ENCODE measurements at regions of chr5 and their contacts with region 1.

Region 1: DNA sequence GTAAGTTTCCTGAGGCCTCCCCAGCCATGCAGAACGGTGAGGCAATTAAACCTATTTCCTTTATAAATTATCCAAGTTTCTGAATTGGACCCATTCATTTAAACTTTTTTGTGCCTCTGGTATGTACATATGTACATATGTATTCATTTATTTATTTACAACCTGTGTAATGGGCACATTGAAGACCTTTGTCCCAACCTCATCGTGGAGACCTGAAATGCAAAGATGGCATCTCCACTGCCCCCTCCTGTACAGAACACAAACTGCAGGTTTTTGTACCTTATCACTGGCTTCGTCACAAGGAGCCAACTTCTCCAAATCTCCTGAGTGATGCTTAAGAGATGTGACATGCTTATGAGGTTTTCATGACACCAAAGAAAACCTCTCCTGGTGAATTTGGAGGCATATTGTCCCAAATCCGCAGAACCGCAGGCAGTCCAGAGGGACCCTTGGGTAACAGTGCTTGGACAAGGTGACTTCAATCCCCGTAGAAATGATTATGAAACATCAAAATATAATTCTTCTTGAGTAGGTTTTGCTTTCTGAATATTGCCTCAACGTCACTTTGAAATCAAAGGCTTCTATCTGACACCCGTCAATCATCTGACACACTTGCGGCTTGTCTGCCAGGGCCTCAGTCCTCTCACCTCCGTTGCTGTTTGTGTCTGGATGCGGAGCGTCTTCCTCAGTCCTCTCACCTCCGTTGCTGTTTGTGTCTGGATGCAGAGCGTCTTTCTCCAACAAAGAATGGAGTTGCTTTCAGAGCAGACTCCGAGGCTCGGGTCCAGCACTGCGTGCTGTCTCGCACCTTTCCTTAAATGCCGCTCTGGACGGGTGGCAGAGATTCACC is 135.0 kb upstream of the IRX4 start:
- DNase-seq: peak; percentile 62
- H3K4me3 Mint-ChIP-seq: no peak overlapping the region
- H3K27ac Mint-ChIP-seq: no peak overlapping the region
- H3K4me1 Mint-ChIP-seq: no peaks in the 10 kb centered on the region
- H3K27me3 Mint-ChIP-seq: peaks cover 14% of the 10 kb centered on the region

Region 2: DNA sequence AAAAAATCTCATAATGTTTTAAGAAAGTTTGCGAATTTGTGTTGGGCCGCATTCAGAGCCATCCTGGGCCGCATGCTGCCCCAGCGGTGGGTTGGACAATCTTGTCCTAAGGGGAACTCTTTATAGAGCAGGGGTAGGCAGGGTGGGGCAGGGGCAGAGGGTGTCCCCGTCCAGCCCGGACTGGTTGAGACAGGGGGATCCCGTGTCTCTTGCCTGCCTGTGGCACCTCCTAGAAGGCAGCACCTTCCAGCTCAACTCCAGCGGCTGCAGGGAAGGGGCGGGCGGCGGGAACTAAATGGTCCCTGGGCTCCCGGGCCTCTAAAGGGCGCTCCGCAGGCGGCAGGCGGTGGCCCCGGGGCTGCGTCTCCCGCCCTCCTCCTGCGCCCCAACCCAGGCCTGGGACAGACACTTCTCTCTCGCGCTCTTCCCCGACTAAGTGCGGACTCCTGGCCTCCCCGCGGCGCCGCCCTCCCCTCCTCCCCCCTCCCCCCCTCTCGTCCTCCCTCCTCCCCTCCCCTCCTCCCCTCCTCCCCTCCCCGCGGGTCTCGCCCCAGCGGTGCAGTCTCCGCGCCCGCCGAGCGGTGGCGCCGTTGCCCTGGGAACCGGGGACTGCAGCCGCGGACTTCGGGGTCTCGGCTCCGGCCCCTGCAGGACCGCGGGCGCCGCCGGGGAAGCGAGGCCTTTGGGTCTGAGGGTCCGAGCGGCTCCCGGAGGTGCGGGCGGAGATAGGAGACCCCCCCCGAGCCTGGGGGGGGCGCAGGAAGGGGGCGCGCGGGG is 350.8 kb before region 1 on chr5:
- CTCF ChIA-PET with region 1: interaction called, 3 read pairs
- intact Hi-C with region 1: loop called (anchors 2 kb)
- DNase-seq: peak; percentile 64
- H3K4me3 Mint-ChIP-seq: peak overlapping the region; percentile 33
- H3K27ac Mint-ChIP-seq: no peak overlapping the region
- H3K4me1 Mint-ChIP-seq: peaks cover 18% of the 10 kb centered on the region
- H3K27me3 Mint-ChIP-seq: peaks cover 60% of the 10 kb centered on the region

Region 3: DNA sequence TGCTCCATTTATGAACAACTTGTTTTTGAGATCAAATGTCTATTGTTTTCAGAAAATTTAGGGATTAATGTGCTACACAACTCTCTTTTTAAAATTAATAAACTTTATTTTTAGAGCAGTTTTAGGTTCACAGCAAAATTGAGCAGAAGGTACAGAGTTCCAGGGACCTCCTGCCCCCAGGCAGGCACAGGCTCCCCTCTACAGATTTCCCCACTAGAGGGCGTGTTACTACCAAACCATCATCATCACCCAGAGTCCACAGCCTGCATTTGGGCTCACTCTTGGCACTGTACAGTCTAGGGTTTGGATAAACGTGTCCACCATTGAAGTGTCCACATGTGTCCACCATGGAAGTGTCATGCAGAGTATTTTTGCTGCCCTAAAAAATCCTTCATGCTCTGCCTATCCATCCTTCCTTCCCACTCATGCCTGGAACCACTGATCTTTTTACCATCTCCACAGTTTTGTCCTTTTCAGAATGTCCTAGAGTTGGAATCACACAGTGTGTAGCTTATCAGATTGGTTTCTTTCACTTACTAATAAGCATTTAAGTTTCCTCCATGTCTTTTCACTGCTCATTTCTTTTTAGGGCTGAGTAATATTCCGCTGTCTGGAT is 279.9 kb before region 1 on chr5:
- CTCF ChIA-PET with region 1: interaction called, 4 read pairs
- intact Hi-C with region 1: loop called (anchors 2 kb)
- DNase-seq: peak; percentile 68
- H3K4me3 Mint-ChIP-seq: no peak overlapping the region
- H3K27ac Mint-ChIP-seq: no peak overlapping the region
- H3K4me1 Mint-ChIP-seq: no peaks in the 10 kb centered on the region
- H3K27me3 Mint-ChIP-seq: peaks cover 17% of the 10 kb centered on the region

Region 4: GRCh38 chr5:1763548-1763911 is 254.2 kb before region 1 on chr5:
- CTCF ChIA-PET with region 1: interaction called, 3 read pairs
- intact Hi-C with region 1: loop called (anchors 1 kb)
- DNase-seq: peak; percentile 49
- H3K4me3 Mint-ChIP-seq: no peak overlapping the region
- H3K27ac Mint-ChIP-seq: no peak overlapping the region
- H3K4me1 Mint-ChIP-seq: no peaks in the 10 kb centered on the region
- H3K27me3 Mint-ChIP-seq: peaks cover 7% of the 10 kb centered on the region

Region 5: DNA sequence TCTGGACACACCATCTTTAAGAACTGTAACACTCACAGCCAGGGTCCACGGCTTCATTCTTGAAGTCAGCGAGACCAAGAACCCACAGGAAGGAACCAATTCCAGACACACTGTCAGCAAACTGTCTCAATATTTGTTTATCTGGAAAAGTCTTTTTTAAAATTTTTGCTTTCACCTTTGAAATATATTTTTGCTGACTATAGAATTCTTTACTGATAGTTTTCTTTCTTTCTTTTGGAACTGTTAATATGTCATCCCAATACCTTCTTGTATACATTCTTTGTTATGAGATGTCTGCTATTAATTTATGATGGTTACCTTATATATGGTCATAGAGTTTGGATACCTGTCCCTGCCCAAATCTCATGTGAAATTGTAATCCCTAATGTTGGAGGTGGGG is 10.0 kb after region 1 on chr5:
- CTCF ChIA-PET with region 1: no interaction called
- intact Hi-C with region 1: no loop called
- DNase-seq: no peak
- H3K4me3 Mint-ChIP-seq: no peak overlapping the region
- H3K27ac Mint-ChIP-seq: no peak overlapping the region
- H3K4me1 Mint-ChIP-seq: no peaks in the 10 kb centered on the region
- H3K27me3 Mint-ChIP-seq: peaks cover 40% of the 10 kb centered on the region

Measured in activated naive CD4-positive, alpha-beta T cell treated with anti-CD3 and anti-CD28 coated beads for 36 hours (primary cell).